Ovary (tissue), 10 donors: ENCODE measurements at regions of chr17 and their contacts with region 1.

Region 1: GRCh38 chr17:50949989-50950881 is 84.1 kb upstream of the TOB1 start:
- DNase-seq: peak; percentile 78 to 87 (median 79)
- H3K4me3 ChIP-seq: no peak overlapping the region
- H3K27ac ChIP-seq: peak overlapping the region; percentile 59 to 63
- H3K4me1 ChIP-seq: peaks cover 26% of the 10 kb centered on the region
- H3K27me3 ChIP-seq: no peaks in the 10 kb centered on the region
- CTCF ChIP-seq: peak; percentile 16 to 74 (median 53)
- EP300 ChIP-seq: peak; percentile 60
- POLR2A ChIP-seq: no peak

Region 2: DNA sequence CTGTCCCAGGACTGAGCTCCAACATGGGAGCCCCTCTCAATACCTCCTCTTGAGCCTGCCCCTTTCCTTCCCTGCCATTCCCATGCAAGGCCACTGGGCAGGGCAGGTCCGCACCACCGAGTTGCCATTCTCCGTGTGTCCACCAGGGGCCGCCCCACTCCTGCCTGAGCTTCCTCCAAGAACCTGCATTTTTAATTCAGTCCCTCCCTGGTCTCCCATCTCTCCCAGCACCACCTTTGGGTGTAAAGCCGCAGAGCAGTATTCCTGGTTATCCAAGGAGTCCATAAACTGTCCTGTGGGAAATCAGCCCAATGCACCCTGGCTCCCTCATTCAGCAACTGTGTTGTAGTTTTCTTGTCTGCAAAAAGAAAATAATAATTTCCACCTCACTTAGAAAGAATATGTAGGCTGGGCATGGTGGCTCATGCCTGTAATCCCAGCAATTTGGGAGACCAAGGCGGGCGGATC is 167.0 kb before region 1 on chr17:
- intact Hi-C with region 1: loop called in 1 of 4 experiments (anchors 10 kb)
- DNase-seq: peak; percentile 79 to 94 (median 89)
- H3K4me3 ChIP-seq: no peak overlapping the region
- H3K27ac ChIP-seq: no peak overlapping the region
- H3K4me1 ChIP-seq: peaks cover 8% of the 10 kb centered on the region
- H3K27me3 ChIP-seq: no peaks in the 10 kb centered on the region
- CTCF ChIP-seq: peak; percentile 93 to 99 (median 98)
- EP300 ChIP-seq: no peak
- POLR2A ChIP-seq: no peak